ENCODE measurements at regions of chr4 and their contacts with region 1.

Region 1: DNA sequence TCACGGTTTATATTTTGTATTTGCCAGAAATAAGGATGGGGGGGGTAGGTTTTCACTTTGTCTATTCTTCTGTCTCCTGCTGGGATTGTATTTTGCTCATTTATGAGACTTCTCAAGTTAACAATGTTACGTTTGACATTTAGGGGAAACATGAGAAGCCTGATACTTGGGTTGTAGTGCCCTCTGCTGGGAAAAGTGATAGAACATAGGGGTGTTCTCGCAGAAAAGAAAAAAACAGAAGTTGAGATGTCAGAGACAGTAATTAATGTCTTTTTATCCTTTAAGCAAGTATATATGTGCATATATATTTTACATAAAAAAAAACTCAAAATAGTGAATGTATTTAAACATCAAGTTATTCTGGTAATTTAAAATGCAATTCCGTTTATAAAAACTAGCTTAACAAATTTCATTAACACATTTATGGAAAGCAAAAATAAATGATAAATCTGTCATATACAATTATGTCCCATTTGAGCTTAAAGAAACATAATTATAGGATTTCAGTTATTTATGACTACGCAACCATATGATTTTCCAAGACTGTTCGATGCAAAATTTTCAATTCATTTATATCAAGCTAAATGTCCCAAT is 46.0 kb upstream of the TMPRSS11F start:
- DNase-seq: peak; percentile 67 to 87 (median 78)
- H3K4me3 ChIP-seq: no peak overlapping the region
- H3K27ac ChIP-seq: no peak overlapping the region
- H3K4me1 ChIP-seq: no peaks in the 10 kb centered on the region
- H3K27me3 ChIP-seq: no peaks in the 10 kb centered on the region

Region 2: GRCh38 chr4:67918428-67918827 is 257.2 kb before region 1 on chr4:
- CTCF ChIA-PET with region 1: interaction called, 20 read pairs
- POLR2A ChIA-PET with region 1: no interaction called
- DNase-seq: peak in 2 of 3 donors; percentile 52 to 62
- H3K4me3 ChIP-seq: no peak overlapping the region
- H3K27ac ChIP-seq: no peak overlapping the region
- H3K4me1 ChIP-seq: no peaks in the 10 kb centered on the region
- H3K27me3 ChIP-seq: no peaks in the 10 kb centered on the region

Measured in common myeloid progenitor, CD34-positive (primary cell).